Left lung (tissue), 14 donors: ENCODE measurements at regions of chr17 and their contacts with region 1.

Region 1: DNA sequence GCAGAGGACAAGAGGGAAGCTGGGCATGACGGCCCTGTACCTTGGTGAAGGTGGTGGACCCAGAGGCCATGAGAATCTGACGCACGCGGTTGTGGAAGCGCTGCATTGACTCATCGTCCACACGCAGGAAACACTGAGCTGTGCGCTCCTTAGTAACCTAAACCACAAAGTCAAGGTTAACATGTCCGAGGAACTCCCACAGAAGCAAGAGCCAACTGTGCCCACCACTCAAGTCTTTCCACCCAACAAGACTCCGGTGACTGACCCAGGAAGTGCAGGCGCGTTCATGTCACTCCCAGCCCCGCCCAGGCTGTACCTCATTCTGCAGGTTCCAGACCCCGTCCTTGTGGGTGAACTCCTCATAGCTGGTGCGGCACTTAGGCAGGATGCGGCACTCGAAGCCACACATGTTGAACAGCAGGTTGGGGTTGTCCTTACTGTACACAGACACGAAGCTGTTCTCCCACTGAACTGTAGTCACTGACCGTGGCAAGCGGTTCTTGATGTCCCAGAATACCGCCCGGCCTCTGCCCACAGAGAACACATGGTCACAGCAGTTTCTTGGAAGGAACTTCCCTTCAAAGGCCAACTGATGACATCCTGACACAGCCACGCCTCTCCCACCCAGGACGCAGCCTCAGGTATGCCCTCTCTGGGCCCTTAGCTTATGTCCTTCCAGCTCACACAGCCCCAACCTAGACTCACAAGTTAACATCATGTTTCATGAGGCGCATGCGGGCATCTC is 11.5 kb downstream of the PRPF8 start:
- DNase-seq: peak in 1 of 4 donors; percentile 58
- ATAC-seq: no peak
- H3K4me3 ChIP-seq: no peak overlapping the region
- H3K27ac ChIP-seq: no peak overlapping the region
- H3K4me1 ChIP-seq: peaks cover 0 to 23% of the 10 kb centered on the region in 2 donors
- H3K27me3 ChIP-seq: no peaks in the 10 kb centered on the region
- CTCF ChIP-seq: no peak

Region 2: GRCh38 chr17:1532836-1533602 is 140.2 kb before region 1 on chr17:
- intact Hi-C with region 1: no loop called
- DNase-seq: peak in 1 of 4 donors; percentile 45
- ATAC-seq: peak; percentile 51
- H3K4me3 ChIP-seq: no peak overlapping the region
- H3K27ac ChIP-seq: no peak overlapping the region
- H3K4me1 ChIP-seq: no peaks in the 10 kb centered on the region
- H3K27me3 ChIP-seq: no peaks in the 10 kb centered on the region
- CTCF ChIP-seq: no peak

Region 3: GRCh38 chr17:1865252-1866037 is 192.2 kb after region 1 on chr17:
- intact Hi-C with region 1: loop called in 1 of 2 experiments (anchors 10 kb)
- DNase-seq: peak in 1 of 4 donors; percentile 13
- ATAC-seq: peak; percentile 85
- H3K4me3 ChIP-seq: no peak overlapping the region
- H3K27ac ChIP-seq: no peak overlapping the region
- H3K4me1 ChIP-seq: no peaks in the 10 kb centered on the region
- H3K27me3 ChIP-seq: no peaks in the 10 kb centered on the region
- CTCF ChIP-seq: peak; percentile 50 to 59